Cardiac septum (tissue), 1 donor: ENCODE measurements at regions of chr12 and their contacts with region 1.

Region 1: GRCh38 chr12:92078167-92079053 is 67.2 kb downstream of the BTG1 start:
- DNase-seq: no peak

Region 2: DNA sequence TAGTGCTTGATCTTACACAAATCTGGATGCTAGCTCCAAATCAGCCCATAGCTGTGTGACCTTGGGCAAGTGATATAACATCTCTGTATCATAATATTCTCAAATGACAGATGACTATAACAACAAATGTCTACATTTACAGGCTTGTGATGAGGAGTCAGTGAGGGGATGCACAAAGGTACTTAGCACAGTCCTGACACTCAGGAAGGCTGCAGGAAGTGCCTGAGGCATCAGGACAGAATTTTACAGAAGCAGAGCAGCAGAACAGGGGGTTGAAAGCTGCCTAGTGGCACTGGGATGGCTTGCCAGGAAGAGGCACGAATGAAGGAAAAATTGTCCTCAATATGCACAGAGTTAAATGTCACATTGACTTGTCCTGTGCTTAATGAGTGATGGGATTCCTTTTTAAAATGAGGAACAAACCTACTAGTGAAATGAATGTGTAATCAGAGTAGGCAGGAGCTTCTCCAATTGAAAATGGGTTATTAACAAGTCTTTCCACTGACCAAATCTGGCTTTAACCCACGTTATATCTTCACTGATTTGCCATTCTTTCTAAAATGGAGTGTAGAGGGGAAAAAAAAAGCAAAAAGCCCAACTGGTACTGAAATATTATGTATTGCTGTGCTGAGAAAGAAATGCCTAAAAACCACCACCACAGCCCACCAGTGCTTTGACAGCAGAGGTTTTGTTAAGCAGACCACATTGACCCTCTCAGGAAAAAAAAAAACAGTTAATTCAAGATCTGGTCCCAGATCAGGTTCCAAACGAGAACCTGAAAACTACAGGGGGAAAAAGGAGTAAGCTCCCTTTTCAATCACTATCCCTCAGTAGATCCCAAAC is 55.6 kb after region 1 on chr12:
- intact Hi-C with region 1: loop called (anchors 5 kb)
- DNase-seq: no peak